ENCODE measurements at regions of chr5 and their contacts with region 1.

Region 1: DNA sequence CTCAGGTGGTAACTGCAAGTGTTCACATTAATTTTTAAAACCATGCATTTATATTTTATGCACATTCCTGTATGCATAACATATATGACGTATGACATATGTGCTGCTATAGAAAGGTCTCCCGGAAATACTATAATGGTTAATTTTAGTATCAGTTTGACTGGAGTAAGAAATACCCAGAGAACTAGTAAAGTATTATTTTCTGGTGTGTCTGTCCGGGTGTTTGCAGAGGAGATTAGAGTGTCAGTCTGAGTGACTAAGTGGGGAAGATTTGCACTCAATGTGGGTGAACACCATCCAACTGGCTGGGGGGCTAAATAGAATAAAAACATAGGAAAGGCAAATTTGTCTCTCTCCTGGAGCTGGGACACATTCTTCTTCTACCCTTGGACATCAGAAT is 26.9 kb downstream of the UIMC1 start:
- DNase-seq: no peak
- H3K4me3 ChIP-seq: no peak overlapping the region
- H3K4me3 Mint-ChIP-seq: no peak overlapping the region
- H3K27ac ChIP-seq: peak overlapping the region in 1 of 2 donors; percentile 10
- H3K27ac Mint-ChIP-seq: peak overlapping the region in 4 of 7 donors; percentile 13 to 62 (median 56)
- H3K4me1 ChIP-seq: no peaks in the 10 kb centered on the region
- H3K4me1 Mint-ChIP-seq: peaks cover 2% of the 10 kb centered on the region
- H3K27me3 ChIP-seq: no peaks in the 10 kb centered on the region
- H3K27me3 Mint-ChIP-seq: peaks cover 0 to 2% (median 0%) of the 10 kb centered on the region in 3 donors
- CTCF ChIP-seq: no peak

Region 2: GRCh38 chr5:177022384-177023308 is 43.0 kb after region 1 on chr5 and contains the start of gene ZNF346:
- intact Hi-C with region 1: loop called in 1 of 2 experiments (anchors 5 kb)
- DNase-seq: peak; percentile 91 to 94 (median 93)
- H3K4me3 ChIP-seq: peak within 1 kb of the TSS; percentile 52 to 90 (median 85)
- H3K4me3 Mint-ChIP-seq: peak within 1 kb of the TSS; percentile 99 to 100
- H3K27ac ChIP-seq: peak within 1 kb of the TSS; percentile 25 to 86
- H3K27ac Mint-ChIP-seq: peak within 1 kb of the TSS; percentile 79 to 92 (median 91)
- H3K4me1 ChIP-seq: peaks cover 15 to 16% of the 10 kb centered on the region in 2 donors
- H3K4me1 Mint-ChIP-seq: peaks cover 29% of the 10 kb centered on the region
- H3K27me3 ChIP-seq: no peaks in the 10 kb centered on the region
- H3K27me3 Mint-ChIP-seq: peaks cover 0 to 3% (median 2%) of the 10 kb centered on the region in 3 donors
- CTCF ChIP-seq: peak; percentile 62
- polyA plus RNA-seq, gene ZNF346: 6.0 to 9.6 (median 6.4) TPM